CD4-positive, alpha-beta T cell (primary cell): ENCODE measurements at regions of chr1 and their contacts with region 1.

Region 1: GRCh38 chr1:176374967-176375569 is 87.9 kb upstream of the PAPPA2 start:
- DNase-seq: peak; percentile 5 to 53 (median 35)
- ATAC-seq: peak; percentile 37
- H3K4me3 ChIP-seq: no peak overlapping the region
- H3K4me3 Mint-ChIP-seq: no peak overlapping the region
- H3K27ac ChIP-seq: no peak overlapping the region
- H3K27ac Mint-ChIP-seq: no peak overlapping the region
- H3K4me1 ChIP-seq: no peaks in the 10 kb centered on the region
- H3K4me1 Mint-ChIP-seq: no peaks in the 10 kb centered on the region
- H3K27me3 ChIP-seq: no peaks in the 10 kb centered on the region
- H3K27me3 Mint-ChIP-seq: peaks cover 12% of the 10 kb centered on the region
- CTCF ChIP-seq: peak; percentile 66

Region 2: GRCh38 chr1:176136891-176137290 is 238.2 kb before region 1 on chr1:
- CTCF ChIA-PET with region 1: no interaction called
- POLR2A ChIA-PET with region 1: no interaction called
- intact Hi-C with region 1: no loop called
- DNase-seq: no peak
- ATAC-seq: no peak
- H3K4me3 ChIP-seq: no peak overlapping the region
- H3K4me3 Mint-ChIP-seq: no peak overlapping the region
- H3K27ac ChIP-seq: no peak overlapping the region
- H3K27ac Mint-ChIP-seq: no peak overlapping the region
- H3K4me1 ChIP-seq: no peaks in the 10 kb centered on the region
- H3K4me1 Mint-ChIP-seq: peaks cover 43% of the 10 kb centered on the region
- H3K27me3 ChIP-seq: no peaks in the 10 kb centered on the region
- H3K27me3 Mint-ChIP-seq: no peaks in the 10 kb centered on the region
- CTCF ChIP-seq: no peak

Region 3: DNA sequence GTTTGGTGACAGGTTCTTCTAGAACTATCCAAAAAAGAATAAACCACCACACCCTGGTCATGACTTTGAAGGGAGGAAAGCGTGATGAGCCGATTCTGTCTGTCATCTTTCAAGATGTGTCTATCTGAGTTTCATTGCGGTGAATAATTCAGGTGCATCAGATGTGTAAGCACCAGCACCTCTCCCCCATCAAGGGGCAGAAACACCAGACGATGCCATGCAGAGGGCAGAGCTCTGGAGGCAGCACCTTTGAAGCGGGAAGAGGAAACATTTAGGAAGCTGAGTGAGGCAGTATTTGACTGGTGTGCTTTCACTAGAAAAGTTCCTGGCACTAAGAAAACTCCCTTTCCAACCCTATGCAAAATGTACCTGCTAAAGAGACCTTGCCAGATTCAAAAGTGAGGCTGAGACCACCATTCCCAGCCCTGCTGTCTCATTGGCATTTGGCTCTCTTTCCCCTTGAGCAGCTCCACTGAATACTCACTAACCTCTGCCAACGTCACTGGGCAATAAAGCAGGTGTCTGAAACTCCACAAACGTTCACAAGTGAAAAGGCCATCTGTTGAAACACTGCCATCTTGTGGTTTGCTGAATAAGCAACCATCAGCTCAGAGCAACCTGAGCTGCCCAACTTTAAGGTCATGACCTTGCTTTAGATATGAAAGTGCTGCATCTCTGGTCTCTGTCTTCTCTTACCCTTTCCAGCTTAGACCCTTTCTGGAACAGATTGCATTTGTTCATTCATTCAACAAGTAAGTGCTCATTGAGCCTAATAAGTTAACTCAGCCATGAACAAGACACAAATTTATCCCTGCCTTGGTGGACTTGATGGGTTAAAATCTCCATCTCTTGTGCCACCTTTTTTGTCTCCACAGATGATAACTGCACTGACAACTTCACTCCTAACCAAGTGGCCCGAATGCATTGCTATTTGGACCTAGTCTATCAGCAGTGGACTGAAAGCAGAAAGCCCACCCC is 316.5 kb after region 1 on chr1:
- CTCF ChIA-PET with region 1: no interaction called
- POLR2A ChIA-PET with region 1: no interaction called
- intact Hi-C with region 1: loop called in 1 of 2 experiments (anchors 10 kb)
- DNase-seq: peak in 3 of 14 experiments; percentile 9 to 36 (median 27)
- ATAC-seq: no peak
- H3K4me3 ChIP-seq: no peak overlapping the region
- H3K4me3 Mint-ChIP-seq: no peak overlapping the region
- H3K27ac ChIP-seq: no peak overlapping the region
- H3K27ac Mint-ChIP-seq: no peak overlapping the region
- H3K4me1 ChIP-seq: no peaks in the 10 kb centered on the region
- H3K4me1 Mint-ChIP-seq: no peaks in the 10 kb centered on the region
- H3K27me3 ChIP-seq: peaks cover 0 to 2% of the 10 kb centered on the region in 2 experiments
- H3K27me3 Mint-ChIP-seq: no peaks in the 10 kb centered on the region
- CTCF ChIP-seq: peak; percentile 33